ENCODE measurements at regions of chr7 and their contacts with region 1.

Region 1: DNA sequence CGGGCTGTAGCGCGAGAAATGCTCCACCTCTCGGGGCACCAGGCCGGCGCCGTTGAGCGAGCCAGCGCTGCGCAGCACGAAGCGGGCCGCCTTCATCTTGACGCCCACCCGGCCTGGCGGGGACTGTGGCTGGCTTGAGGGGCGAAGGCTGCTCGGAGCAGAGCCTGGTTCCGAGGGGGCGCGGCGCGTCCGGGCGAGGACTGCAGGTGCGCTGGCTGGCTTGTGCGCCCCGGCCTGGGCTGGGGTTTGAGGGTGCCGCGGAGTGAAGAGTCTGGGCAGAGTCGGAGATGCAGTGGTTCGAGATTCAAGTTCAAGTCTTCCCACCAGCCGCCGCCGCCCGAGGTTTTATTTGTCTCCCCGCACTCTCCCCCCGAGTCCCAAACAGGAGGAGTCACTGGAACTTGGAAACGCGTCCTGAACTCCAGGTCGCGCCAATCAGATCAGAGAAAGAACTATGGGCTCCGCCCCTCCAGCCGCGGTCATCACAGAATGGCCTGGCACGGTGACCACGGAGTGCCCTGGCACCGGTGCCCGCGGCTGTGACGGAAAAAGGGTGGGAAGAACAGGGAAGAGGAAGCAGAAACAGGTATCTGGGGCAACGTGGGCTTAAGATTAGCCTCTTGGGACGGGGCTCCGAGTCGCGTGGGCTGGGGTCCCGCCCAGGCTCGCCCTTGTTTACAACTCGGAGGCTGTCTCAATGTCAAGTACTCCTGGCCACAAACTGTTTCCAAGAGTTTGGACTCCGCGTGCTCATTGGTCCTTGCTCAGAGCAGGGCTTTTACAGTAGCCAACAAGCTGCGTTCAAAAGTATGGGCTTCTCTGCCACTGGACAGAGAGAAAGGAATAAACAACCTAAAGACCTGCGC is at the start of gene PDK4:
- DNase-seq: peak; percentile 97
- ATAC-seq: peak; percentile 93
- total RNA-seq, gene PDK4: 431 TPM

Region 2: DNA sequence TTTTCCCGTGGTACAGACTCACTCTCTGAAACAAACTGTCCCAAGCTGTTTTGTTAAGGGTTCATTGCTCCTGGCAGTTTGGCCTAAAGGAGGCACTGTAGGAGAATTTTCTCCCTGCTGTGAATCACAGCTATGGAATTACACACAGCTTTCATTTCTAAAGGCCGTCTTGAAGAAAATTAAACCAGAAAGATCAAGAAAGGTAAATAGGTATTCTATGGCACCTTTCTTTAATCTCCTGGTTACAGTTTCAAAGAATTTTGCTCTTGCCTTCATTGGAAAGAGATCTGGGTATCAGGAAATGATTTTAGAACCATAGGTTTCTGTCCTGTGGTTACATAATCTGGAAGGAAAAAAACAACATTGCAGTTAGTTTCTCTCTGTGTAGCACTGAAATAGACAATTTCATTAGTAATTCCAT is 51.3 kb before region 1 on chr7:
- intact Hi-C with region 1: loop called (anchors 1 kb)
- DNase-seq: no peak
- ATAC-seq: peak; percentile 81

Region 3: GRCh38 chr7:95619517-95619916 is 23.1 kb after region 1 on chr7:
- intact Hi-C with region 1: no loop called
- DNase-seq: no peak
- ATAC-seq: no peak